Dendritic cell treated with granulocyte-macrophage colony-stimulating factor and Interleukin-4, amounts not matched to agents 40 ng/mL and 50 ng/mL, for 4 days (primary cell): ENCODE measurements at regions of chr11 and their contacts with region 1.

Region 1: GRCh38 chr11:60280412-60280811 is at the start of gene MS4A4A:
- H3K4me3 Mint-ChIP-seq: peak within 1 kb of the TSS; percentile 79
- H3K27ac Mint-ChIP-seq: peak within 1 kb of the TSS; percentile 97
- H3K4me1 Mint-ChIP-seq: peaks cover 55% of the 10 kb centered on the region
- H3K27me3 Mint-ChIP-seq: no peaks in the 10 kb centered on the region

Region 2: DNA sequence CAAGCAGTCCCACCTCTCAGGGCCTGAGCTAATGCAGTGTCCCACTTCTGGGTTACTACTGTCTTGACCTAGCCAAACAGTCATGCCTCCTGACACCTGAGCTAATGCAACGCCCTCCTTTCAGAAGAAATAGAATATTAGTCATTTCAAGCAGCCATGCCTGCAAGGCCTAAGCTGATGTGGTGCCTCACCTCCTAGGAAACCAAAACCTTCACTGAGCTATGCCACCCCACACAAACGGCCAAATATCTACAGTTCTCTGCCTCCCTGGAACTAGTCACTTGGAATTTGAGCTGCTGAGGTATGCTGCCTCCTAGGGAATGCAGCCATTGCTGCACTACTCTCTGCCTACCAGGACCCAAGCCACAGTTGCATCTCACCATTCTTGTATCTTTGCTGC is 38.3 kb after region 1 on chr11:
- intact Hi-C with region 1: loop called (anchors 5 kb)
- H3K4me3 Mint-ChIP-seq: no peak overlapping the region
- H3K27ac Mint-ChIP-seq: no peak overlapping the region
- H3K4me1 Mint-ChIP-seq: peaks cover 18% of the 10 kb centered on the region
- H3K27me3 Mint-ChIP-seq: no peaks in the 10 kb centered on the region

Region 3: DNA sequence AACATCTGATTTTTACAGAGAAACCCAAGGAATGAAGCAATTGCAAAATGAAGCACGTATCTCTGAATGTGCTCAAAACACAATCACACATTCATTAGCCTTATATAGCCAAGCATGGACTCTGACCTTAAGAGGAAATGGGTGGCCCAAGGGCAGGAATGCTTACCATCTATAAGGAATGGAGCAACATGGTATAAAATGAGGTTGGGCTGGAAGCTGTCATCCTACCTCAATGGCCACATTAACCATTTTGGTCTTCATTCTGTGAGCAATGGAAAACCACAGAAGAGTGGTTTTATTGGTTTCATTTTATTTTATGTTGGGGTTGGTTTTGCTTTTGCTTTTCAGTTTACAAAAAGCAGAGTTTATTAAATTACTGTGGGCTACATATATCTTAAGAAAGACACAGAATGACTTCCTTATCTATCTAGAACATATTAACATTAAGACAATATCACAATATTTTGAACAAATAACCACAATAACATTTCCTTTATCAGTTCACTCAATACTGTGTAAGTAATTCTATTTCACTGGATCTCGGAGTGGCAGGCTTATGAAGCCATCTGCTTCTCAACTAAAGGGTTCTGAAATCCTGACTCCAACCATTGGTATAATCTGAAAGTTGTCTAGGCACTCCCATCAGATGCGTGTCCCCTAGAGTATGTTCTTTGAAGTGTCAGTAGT is 223.9 kb after region 1 on chr11:
- intact Hi-C with region 1: no loop called
- H3K4me3 Mint-ChIP-seq: no peak overlapping the region
- H3K27ac Mint-ChIP-seq: no peak overlapping the region
- H3K4me1 Mint-ChIP-seq: peaks cover 5% of the 10 kb centered on the region
- H3K27me3 Mint-ChIP-seq: peaks cover 2% of the 10 kb centered on the region